Right ventricle myocardium superior (tissue), 1 donor: ENCODE measurements at regions of chr10 and their contacts with region 1.

Region 1: GRCh38 chr10:116961406-116962251 is 43.4 kb downstream of the SHTN1 start:
- DNase-seq: no peak
- ATAC-seq: no peak

Region 2: DNA sequence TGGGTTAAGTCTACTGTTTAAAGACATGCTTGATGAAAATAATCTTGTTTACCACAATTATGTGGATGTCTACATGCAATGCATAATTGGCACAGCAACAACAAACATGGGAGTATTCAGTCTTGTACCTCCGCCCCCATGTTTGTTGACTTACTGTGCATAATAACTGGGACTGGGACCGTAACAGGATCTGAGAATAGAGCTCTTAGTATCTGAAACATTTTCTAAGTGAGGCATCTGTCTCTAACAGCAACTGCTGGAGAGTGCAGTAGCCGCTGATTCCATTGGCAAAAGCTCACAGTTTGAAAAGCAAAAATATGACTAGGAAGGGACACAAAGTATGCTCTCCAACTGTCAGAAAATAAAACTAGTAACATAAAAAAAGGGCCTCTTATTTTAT is 50.7 kb before region 1 on chr10:
- intact Hi-C with region 1: loop called (anchors 10 kb)
- DNase-seq: no peak
- ATAC-seq: peak; percentile 52

Region 3: GRCh38 chr10:117005027-117005526 is 43.4 kb after region 1 on chr10 and contains the start of gene SHTN1:
- intact Hi-C with region 1: no loop called
- DNase-seq: peak; percentile 76
- ATAC-seq: peak; percentile 89
- total RNA-seq, gene SHTN1: 2.6 TPM